Sigmoid colon (tissue), 7 donors: ENCODE measurements at regions of chr10 and their contacts with region 1.

Region 1: GRCh38 chr10:18140149-18140956 is at the start of gene CACNB2:
- DNase-seq: peak; percentile 93
- H3K4me3 ChIP-seq: peak within 1 kb of the TSS; percentile 66 to 91 (median 81)
- H3K27ac ChIP-seq: peak within 1 kb of the TSS; percentile 91 to 97 (median 94)
- H3K4me1 ChIP-seq: peaks cover 0 to 45% (median 38%) of the 10 kb centered on the region in 4 donors
- H3K27me3 ChIP-seq: no peaks in the 10 kb centered on the region
- CTCF ChIP-seq: no peak
- EP300 ChIP-seq: no peak
- POLR2A ChIP-seq: peak; percentile 20 to 31
- total RNA-seq, gene CACNB2: 36.0 to 85.3 (median 66.8) TPM

Region 2: GRCh38 chr10:17808971-17809841 is 331.1 kb before region 1 on chr10 and contains the start of gene MRC1:
- intact Hi-C with region 1: no loop called
- DNase-seq: peak; percentile 75
- H3K4me3 ChIP-seq: peak within 1 kb of the TSS in 3 of 4 donors; percentile 24 to 39 (median 29)
- H3K27ac ChIP-seq: peak within 1 kb of the TSS; percentile 2 to 52 (median 25)
- H3K4me1 ChIP-seq: no peaks in the 10 kb centered on the region
- H3K27me3 ChIP-seq: no peaks in the 10 kb centered on the region
- CTCF ChIP-seq: no peak
- EP300 ChIP-seq: no peak
- POLR2A ChIP-seq: no peak
- total RNA-seq, gene MRC1: 18.8 to 71.7 (median 44.4) TPM

Region 3: DNA sequence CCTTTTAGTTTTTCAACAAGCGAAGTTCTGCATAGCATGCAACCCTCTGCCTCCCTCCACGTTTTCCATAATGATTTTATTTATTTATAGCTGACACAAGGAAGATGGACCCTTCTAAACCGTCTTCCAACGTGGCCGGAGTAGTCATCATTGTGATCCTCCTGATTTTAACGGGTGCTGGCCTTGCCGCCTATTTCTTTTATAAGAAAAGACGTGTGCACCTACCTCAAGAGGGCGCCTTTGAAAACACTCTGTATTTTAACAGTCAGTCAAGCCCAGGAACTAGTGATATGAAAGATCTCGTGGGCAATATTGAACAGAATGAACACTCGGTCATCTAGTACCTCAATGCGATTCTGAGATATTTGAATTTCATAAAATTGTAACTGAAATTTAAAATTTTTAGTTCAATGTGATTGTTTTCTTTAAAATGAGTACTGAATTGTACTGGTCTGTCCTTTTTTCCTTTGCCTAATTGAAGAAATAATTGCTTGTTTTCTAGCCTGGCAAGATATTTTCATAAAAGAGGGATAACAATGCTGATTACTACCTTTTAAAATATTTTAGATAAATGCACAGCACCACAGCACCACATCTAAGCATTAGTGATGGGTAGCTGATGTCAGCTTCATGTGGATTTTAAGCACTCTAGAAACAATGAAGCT is 230.1 kb before region 1 on chr10:
- intact Hi-C with region 1: loop called (anchors 5 kb)
- DNase-seq: peak; percentile 76
- H3K4me3 ChIP-seq: no peak overlapping the region
- H3K27ac ChIP-seq: no peak overlapping the region
- H3K4me1 ChIP-seq: peaks cover 0 to 28% (median 20%) of the 10 kb centered on the region in 4 donors
- H3K27me3 ChIP-seq: no peaks in the 10 kb centered on the region
- CTCF ChIP-seq: peak in 3 of 4 experiments; percentile 57 to 68 (median 60)
- EP300 ChIP-seq: no peak
- POLR2A ChIP-seq: no peak

Region 4: DNA sequence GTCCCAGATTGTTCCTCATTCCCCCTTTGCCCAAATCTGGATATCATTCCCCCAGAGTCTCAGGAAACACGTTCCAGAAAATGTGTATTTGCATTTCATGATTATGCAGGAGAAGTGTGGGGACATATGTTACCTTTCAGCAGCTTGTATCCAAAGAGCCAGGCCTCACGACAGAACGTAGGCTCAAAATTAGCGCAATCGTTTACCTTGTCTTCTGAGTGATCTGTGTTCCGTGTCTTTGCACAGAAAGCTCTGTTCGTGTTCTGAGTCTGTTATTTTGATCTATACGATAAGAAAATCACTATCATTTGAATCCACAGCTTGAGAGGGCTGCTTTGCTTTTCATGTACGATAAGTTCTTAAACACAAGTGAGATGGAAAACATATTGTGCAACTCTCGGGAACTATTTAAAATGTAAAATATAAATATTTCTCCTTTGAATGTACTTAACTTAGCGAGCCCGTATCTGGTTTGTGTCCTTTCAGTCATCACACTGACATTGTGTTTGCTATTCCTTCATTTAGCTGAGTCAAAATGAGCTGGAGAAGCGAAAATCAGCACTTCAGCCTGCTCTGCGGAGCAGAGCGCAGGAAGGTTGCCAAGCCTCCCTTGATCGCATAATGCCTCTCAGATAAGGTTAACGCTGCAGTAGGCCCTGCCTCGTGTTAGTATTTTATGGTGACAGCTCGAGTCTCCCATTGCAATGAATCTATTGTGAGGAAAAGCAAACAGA is 80.4 kb before region 1 on chr10:
- intact Hi-C with region 1: loop called (anchors 5 kb)
- DNase-seq: peak; percentile 87
- H3K4me3 ChIP-seq: peak overlapping the region in 1 of 4 donors; percentile 10
- H3K27ac ChIP-seq: peak overlapping the region; percentile 57 to 79 (median 67)
- H3K4me1 ChIP-seq: peaks cover 0 to 17% (median 8%) of the 10 kb centered on the region in 4 donors
- H3K27me3 ChIP-seq: no peaks in the 10 kb centered on the region
- CTCF ChIP-seq: no peak
- EP300 ChIP-seq: no peak
- POLR2A ChIP-seq: no peak

Region 5: DNA sequence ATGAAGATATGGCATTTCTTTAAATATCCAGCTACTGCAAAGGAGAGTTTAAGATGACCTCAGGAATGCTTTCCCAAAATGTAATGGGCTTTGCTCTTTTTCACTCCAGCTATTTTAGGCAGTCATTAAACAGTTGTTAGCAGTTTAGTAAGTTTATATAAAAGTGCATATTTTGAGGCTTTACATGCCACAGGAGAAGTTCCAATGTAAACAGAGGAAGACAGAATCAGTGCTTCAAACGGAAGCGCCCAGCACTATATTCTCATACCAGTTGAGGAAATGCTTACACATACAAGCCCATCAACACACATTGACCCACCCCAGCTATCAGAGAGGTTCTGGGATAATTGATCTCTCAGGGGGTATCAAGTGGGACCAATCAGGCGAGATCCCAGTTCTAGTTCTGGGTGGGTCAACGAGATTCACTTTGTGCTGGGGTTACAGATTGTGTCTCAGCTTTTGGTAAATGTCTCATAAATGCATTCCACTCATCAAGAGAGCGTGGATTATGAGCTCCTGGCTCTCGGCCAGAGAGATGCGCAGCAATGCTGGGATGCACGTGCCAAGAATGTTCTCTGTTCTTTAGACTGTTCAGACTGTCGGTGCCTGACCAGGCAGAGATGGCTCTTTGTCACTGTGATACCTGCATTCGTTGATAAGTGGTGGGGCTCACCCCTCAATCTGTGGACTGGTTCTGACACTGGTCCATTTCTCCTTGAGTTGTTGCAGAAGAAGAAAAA is 54.9 kb after region 1 on chr10:
- intact Hi-C with region 1: loop called (anchors 2 kb)
- DNase-seq: peak; percentile 74
- H3K4me3 ChIP-seq: no peak overlapping the region
- H3K27ac ChIP-seq: peak overlapping the region; percentile 80 to 92 (median 84)
- H3K4me1 ChIP-seq: peaks cover 0 to 62% (median 45%) of the 10 kb centered on the region in 4 donors
- H3K27me3 ChIP-seq: no peaks in the 10 kb centered on the region
- CTCF ChIP-seq: no peak
- EP300 ChIP-seq: peak in 2 of 4 donors; percentile 2 to 10
- POLR2A ChIP-seq: no peak

Region 6: GRCh38 chr10:18378766-18379165 is 238.4 kb after region 1 on chr10:
- intact Hi-C with region 1: no loop called
- DNase-seq: peak; percentile 77
- H3K4me3 ChIP-seq: no peak overlapping the region
- H3K27ac ChIP-seq: peak overlapping the region in 2 of 4 donors; percentile 24 to 33
- H3K4me1 ChIP-seq: peaks cover 0 to 17% (median 7%) of the 10 kb centered on the region in 4 donors
- H3K27me3 ChIP-seq: no peaks in the 10 kb centered on the region
- CTCF ChIP-seq: no peak
- EP300 ChIP-seq: no peak
- POLR2A ChIP-seq: no peak